ENCODE measurements at regions of chr5 and their contacts with region 1.

Region 1: DNA sequence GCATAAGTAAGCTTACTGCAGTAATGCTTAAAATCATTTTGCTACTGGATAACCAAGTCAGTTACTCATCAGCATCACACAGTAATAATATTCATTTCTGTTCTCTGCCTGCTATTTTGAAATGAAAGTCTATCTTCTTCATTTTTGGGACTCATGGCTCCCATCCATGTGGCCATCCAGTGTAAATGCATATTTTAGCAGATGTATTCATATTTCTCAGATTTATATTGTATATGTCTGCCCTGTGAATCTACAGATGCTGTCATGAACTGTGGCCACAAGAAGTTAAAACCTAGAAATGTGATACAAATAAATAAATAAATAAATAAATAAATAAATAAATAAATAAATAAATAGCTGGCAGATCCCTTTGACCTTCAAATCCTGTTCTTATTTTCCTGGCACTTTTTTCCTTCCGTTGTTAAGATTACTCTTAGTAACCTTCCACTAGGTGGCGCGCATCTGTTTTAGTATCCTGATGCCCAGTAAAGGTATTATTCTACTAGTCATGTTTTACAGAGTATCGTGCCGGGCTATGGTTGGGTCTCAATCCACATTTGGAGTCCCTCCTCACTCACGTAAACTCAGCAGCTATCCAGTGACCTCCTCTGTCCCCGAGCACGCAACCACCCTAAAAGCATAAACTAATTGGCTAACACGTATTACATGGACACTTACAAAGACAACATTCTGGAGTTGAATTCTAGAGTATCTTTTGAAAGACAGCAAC is 79.2 kb upstream of the IL7R start:
- DNase-seq: peak; percentile 54
- H3K4me3 ChIP-seq: no peak overlapping the region
- H3K27ac ChIP-seq: no peak overlapping the region
- H3K4me1 ChIP-seq: no peaks in the 10 kb centered on the region
- H3K27me3 ChIP-seq: no peaks in the 10 kb centered on the region
- CTCF ChIP-seq: peak; percentile 44 to 68

Region 2: DNA sequence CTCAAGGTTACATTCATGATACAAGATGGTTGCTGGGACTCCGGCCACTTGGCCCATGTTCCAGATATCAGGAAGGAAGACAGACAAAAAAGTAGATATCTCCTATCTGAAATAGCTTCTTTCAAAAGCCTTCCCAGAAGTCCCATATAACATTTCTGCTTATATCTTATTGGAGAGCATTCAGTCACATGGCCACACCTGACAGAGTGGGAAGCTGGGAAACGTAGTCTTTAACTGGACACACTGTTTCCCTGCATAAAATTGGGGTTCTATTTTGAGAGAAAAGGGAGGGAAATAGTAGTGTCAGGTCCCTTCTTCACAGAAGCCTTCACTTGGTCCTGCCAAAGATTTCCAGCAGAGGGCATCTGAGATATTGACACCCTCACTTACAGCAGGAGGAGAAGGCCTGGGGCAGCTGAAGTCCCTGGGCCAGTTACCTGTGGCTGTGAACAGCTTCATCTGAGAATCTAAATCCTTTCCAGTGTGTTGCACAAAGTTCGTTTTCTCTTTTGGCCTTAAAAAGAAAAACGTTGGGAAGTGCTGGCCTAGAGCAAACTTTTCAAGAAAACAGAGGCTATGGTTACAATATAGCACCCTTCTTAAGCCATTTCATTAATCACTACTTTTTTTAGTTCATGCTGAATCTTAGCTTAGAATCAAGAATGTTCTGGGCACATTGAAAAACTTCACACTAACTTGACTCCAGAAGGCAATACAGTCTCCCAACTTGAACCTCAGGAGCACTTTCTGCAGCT is 126.3 kb before region 1 on chr5:
- CTCF ChIA-PET with region 1: interaction called, 3 read pairs
- dilution Hi-C with region 1: no loop called
- in situ Hi-C with region 1: no loop called
- intact Hi-C with region 1: loop called (anchors 1 kb)
- DNase-seq: peak; percentile 33
- H3K4me3 ChIP-seq: no peak overlapping the region
- H3K27ac ChIP-seq: no peak overlapping the region
- H3K4me1 ChIP-seq: no peaks in the 10 kb centered on the region
- H3K27me3 ChIP-seq: no peaks in the 10 kb centered on the region
- CTCF ChIP-seq: peak; percentile 47 to 66

Region 3: DNA sequence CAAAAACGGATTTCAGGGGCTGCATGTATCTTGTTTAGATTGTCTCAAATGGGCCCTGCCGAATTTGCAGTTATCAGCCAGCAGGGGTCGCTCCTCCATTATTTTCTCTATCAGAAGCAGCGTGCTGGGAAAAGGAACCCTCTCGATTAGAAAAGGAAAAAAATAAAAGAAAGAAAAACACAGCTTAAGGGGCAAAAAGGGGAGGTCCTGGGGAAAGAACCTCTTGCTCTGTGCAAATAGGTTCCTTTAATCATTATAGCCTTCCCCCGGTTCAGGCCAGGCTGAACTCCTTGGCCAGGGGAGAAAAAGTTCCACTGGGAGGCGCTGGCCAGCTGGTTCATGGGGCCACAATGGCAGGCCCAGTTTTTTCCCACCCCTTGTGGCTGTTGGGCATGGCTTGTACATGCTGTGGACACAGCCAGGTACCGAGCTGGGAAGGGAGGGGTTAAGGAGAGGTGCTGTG is 185.9 kb after region 1 on chr5:
- CTCF ChIA-PET with region 1: no interaction called
- dilution Hi-C with region 1: no loop called
- in situ Hi-C with region 1: no loop called
- intact Hi-C with region 1: no loop called
- DNase-seq: peak; percentile 7
- H3K4me3 ChIP-seq: no peak overlapping the region
- H3K27ac ChIP-seq: no peak overlapping the region
- H3K4me1 ChIP-seq: no peaks in the 10 kb centered on the region
- H3K27me3 ChIP-seq: no peaks in the 10 kb centered on the region
- CTCF ChIP-seq: peak; percentile 50 to 61